ENCODE measurements at regions of chr5 and their contacts with region 1.

Region 1: GRCh38 chr5:91632871-91633270 is 249.8 kb upstream of the ARRDC3 start:
- DNase-seq: no peak
- ATAC-seq: no peak

Region 2: GRCh38 chr5:91449083-91449482 is 183.8 kb before region 1 on chr5:
- intact Hi-C with region 1: no loop called
- DNase-seq: no peak
- ATAC-seq: no peak

Region 3: DNA sequence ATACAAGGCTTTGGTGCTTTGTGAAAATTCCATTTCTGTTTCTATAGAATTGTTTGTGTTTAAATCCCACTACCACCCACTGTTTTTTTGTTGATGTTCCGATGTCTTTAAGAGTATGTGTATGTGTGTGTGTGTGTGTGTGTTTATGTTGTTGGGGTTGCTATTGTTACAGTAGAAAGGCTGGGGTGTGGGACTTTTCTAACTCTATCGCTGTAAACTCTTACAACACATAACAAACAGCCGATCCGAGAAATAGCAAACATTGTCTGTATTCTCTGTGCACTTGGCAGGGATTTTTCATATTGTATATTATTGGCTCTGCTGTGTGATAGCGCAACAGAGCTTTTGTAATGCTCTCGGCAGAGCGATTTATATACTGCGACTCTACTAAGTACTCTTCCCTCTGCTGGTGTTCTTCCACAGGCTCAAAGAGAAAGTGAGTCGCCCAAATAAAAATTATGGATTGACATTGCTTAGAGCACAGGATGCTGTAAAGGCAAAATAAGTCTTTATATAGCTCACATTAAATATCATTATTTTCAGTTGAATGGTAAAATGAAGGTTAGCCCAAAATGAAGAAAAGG is 242.4 kb after region 1 on chr5:
- intact Hi-C with region 1: loop called (anchors 10 kb)
- DNase-seq: no peak
- ATAC-seq: no peak

Measured in Right ventricle myocardium inferior (tissue), 1 donor.